ENCODE measurements at regions of chr16 and their contacts with region 1.

Region 1: DNA sequence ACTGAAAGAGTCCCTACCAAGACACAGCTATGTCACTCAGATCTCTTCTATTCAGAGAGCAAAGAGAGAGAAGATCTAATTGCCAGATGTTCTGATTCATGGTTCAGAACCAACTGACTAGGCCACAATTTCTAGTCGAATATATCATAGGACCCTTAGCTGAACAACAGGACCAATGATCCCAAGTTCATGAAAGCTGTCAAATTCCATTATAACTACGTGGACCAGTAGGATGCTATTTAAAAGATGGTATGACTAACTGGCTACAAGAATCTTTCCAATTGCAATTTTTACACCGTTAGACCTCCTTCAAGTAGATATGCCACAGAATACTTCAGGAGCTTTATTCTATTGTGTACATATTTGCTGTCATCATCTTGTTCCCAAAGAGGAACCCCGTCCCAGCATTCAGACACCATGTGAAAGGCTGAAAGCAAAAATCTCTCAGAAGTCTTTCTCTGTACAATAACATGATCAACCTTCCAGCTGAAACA is 26.0 kb downstream of the DCUN1D3 start:
- DNase-seq: no peak
- H3K4me3 ChIP-seq: peak overlapping the region in 1 of 2 donors; percentile 17
- H3K4me3 Mint-ChIP-seq: peak overlapping the region; percentile 61 to 87 (median 77)
- H3K27ac ChIP-seq: peak overlapping the region; percentile 47
- H3K27ac Mint-ChIP-seq: peak overlapping the region; percentile 81 to 96 (median 89)
- H3K4me1 ChIP-seq: peaks cover 39% of the 10 kb centered on the region
- H3K4me1 Mint-ChIP-seq: peaks cover 34 to 52% (median 37%) of the 10 kb centered on the region in 4 donors
- H3K27me3 ChIP-seq: no peaks in the 10 kb centered on the region
- H3K27me3 Mint-ChIP-seq: no peaks in the 10 kb centered on the region

Region 2: GRCh38 chr16:19542138-19542821 is 1331.9 kb before region 1 on chr16:
- CTCF ChIA-PET with region 1: no interaction called
- POLR2A ChIA-PET with region 1: no interaction called
- intact Hi-C with region 1: no loop called
- DNase-seq: no peak
- H3K4me3 ChIP-seq: no peak overlapping the region
- H3K4me3 Mint-ChIP-seq: no peak overlapping the region
- H3K27ac ChIP-seq: no peak overlapping the region
- H3K27ac Mint-ChIP-seq: no peak overlapping the region
- H3K4me1 ChIP-seq: no peaks in the 10 kb centered on the region
- H3K4me1 Mint-ChIP-seq: peaks cover 0 to 5% (median 0%) of the 10 kb centered on the region in 4 donors
- H3K27me3 ChIP-seq: no peaks in the 10 kb centered on the region
- H3K27me3 Mint-ChIP-seq: no peaks in the 10 kb centered on the region

Region 3: DNA sequence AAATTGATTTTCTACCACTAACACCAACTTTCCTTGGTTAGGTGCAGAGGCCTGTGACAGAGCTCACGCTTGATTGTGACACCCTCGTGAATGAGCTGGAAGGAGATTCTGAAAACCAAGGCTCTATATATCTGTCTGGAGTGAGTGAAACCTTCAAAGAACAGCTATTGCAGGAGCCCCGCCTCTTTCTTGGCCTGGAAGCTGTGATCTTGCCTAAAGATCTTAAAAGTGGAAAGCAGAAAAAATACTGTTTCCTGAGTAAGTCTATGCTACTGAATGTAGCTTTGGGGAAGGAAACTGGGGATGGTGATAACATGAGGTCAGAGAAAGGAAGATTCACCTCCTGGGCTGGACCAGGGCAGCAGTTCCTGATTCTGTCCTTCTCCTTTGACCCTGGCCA is 29.5 kb before region 1 on chr16:
- CTCF ChIA-PET with region 1: interaction called, 113 read pairs
- POLR2A ChIA-PET with region 1: interaction called, 6 read pairs
- intact Hi-C with region 1: no loop called
- DNase-seq: peak in 3 of 5 donors; percentile 9 to 40 (median 17)
- H3K4me3 ChIP-seq: no peak overlapping the region
- H3K4me3 Mint-ChIP-seq: peak overlapping the region in 7 of 8 donors; percentile 12 to 80 (median 68)
- H3K27ac ChIP-seq: peak overlapping the region; percentile 22
- H3K27ac Mint-ChIP-seq: peak overlapping the region; percentile 36 to 89 (median 63)
- H3K4me1 ChIP-seq: peaks cover 25% of the 10 kb centered on the region
- H3K4me1 Mint-ChIP-seq: peaks cover 15 to 27% (median 19%) of the 10 kb centered on the region in 4 donors
- H3K27me3 ChIP-seq: no peaks in the 10 kb centered on the region
- H3K27me3 Mint-ChIP-seq: no peaks in the 10 kb centered on the region

Region 4: GRCh38 chr16:20887207-20887606 is 13.1 kb after region 1 on chr16:
- CTCF ChIA-PET with region 1: interaction called, 10 read pairs
- POLR2A ChIA-PET with region 1: interaction called, 6 read pairs
- intact Hi-C with region 1: no loop called
- DNase-seq: no peak
- H3K4me3 ChIP-seq: no peak overlapping the region
- H3K4me3 Mint-ChIP-seq: no peak overlapping the region
- H3K27ac ChIP-seq: no peak overlapping the region
- H3K27ac Mint-ChIP-seq: no peak overlapping the region
- H3K4me1 ChIP-seq: peaks cover 10% of the 10 kb centered on the region
- H3K4me1 Mint-ChIP-seq: peaks cover 11 to 21% (median 16%) of the 10 kb centered on the region in 4 donors
- H3K27me3 ChIP-seq: no peaks in the 10 kb centered on the region
- H3K27me3 Mint-ChIP-seq: no peaks in the 10 kb centered on the region

Region 5: DNA sequence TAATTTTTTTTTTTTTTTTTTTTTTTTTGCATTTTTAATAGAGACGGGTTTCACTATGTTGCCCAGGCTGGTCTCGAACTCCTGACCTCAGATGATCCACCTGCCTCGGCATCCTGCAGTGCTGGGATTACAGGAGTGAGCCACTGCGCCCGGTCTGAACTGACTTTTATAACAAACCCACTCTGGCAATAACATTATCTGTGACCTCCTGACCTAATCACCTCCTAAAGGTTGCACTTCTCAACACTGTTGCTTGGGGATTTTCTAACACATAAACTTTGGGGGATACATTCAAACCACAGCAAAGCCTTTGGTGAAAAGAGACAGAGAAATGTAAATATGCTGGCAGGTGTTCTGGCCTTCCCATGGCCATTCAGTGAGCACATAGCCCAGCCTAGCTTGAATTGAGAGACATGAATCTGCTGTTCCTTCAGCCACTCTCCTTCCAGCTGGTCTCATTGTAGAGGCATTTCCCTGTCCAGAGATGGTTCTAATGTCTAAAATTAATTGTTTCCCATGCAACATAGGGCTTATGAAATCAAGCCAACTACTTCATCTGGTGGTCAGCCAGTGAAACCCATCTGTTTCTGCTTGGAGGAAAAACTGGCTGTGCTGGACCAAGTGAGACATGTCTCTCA is 54.8 kb after region 1 on chr16:
- CTCF ChIA-PET with region 1: no interaction called
- POLR2A ChIA-PET with region 1: no interaction called
- intact Hi-C with region 1: no loop called
- DNase-seq: no peak
- H3K4me3 ChIP-seq: no peak overlapping the region
- H3K4me3 Mint-ChIP-seq: no peak overlapping the region
- H3K27ac ChIP-seq: no peak overlapping the region
- H3K27ac Mint-ChIP-seq: no peak overlapping the region
- H3K4me1 ChIP-seq: no peaks in the 10 kb centered on the region
- H3K4me1 Mint-ChIP-seq: no peaks in the 10 kb centered on the region
- H3K27me3 ChIP-seq: no peaks in the 10 kb centered on the region
- H3K27me3 Mint-ChIP-seq: no peaks in the 10 kb centered on the region

Region 6: DNA sequence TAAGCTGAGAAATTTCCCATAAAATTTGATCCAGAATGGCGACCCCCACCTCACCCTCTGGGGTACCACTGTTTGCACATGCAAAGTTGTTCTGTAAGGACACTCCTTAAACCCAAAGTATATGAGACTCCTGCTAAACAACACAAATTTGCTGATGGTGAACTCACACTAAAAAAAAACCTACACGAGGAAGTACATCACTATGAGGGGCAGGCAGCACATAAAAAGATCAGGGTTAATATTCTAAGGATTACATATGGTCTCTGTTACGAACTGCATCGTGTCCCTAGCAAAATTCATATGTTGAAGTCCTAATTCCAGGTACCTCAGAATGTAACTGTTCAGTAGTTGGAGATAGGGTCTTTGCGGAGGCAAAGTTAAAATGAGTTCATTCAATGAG is 86.8 kb after region 1 on chr16:
- CTCF ChIA-PET with region 1: no interaction called
- POLR2A ChIA-PET with region 1: no interaction called
- intact Hi-C with region 1: no loop called
- DNase-seq: no peak
- H3K4me3 ChIP-seq: no peak overlapping the region
- H3K4me3 Mint-ChIP-seq: no peak overlapping the region
- H3K27ac ChIP-seq: no peak overlapping the region
- H3K27ac Mint-ChIP-seq: no peak overlapping the region
- H3K4me1 ChIP-seq: no peaks in the 10 kb centered on the region
- H3K4me1 Mint-ChIP-seq: no peaks in the 10 kb centered on the region
- H3K27me3 ChIP-seq: no peaks in the 10 kb centered on the region
- H3K27me3 Mint-ChIP-seq: peaks cover 2 to 3% of the 10 kb centered on the region in 2 donors